Activated naive CD4-positive, alpha-beta T cell treated with anti-CD3 and anti-CD28 coated beads for 36 hours (primary cell): ENCODE measurements at regions of chr5 and their contacts with region 1.

Region 1: DNA sequence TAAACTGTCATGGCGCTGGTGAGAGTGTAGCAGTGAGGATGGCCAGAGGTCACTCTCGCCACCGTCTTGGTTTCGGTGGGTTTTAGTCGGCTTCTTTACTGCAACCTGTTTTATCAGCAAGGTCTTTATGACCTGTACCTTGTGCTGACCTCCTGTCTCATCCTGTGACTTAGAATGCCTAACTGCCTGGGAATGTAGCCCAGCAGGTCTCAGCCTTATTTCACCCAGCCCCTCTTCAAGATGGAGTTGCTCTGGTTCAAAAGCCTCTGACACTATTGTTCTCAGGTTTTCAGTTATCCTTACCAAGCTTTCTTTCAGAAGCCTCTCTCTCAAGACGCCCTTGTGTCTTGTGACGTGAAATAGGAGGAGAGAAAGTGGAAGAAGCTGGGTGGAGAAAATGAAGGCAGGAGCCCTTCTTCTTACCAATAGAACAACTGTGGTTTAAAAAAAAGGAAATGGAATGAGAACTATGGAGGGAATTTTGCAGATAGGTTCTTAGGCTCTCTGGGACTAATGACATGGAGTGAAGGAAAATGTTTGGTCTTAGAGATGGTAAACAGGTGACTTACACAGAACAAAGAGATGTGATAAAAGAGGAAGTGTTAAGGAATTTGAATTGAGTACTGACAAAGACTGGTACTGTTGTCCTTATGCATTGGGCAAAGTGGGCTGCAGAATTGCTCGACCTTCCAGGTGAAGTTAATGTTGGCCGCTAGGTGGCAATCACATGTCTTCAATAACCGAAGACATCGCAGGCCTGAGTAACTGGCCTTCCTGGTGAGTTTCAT is 133.3 kb upstream of the RAI14 start:
- DNase-seq: peak; percentile 73
- H3K4me3 Mint-ChIP-seq: no peak overlapping the region
- H3K27ac Mint-ChIP-seq: no peak overlapping the region
- H3K4me1 Mint-ChIP-seq: peaks cover 4% of the 10 kb centered on the region
- H3K27me3 Mint-ChIP-seq: peaks cover 3% of the 10 kb centered on the region

Region 2: GRCh38 chr5:34474573-34475021 is 48.2 kb before region 1 on chr5:
- CTCF ChIA-PET with region 1: interaction called, 4 read pairs
- intact Hi-C with region 1: loop called (anchors 1 kb)
- DNase-seq: peak; percentile 34
- H3K4me3 Mint-ChIP-seq: no peak overlapping the region
- H3K27ac Mint-ChIP-seq: no peak overlapping the region
- H3K4me1 Mint-ChIP-seq: no peaks in the 10 kb centered on the region
- H3K27me3 Mint-ChIP-seq: peaks cover 11% of the 10 kb centered on the region

Region 3: DNA sequence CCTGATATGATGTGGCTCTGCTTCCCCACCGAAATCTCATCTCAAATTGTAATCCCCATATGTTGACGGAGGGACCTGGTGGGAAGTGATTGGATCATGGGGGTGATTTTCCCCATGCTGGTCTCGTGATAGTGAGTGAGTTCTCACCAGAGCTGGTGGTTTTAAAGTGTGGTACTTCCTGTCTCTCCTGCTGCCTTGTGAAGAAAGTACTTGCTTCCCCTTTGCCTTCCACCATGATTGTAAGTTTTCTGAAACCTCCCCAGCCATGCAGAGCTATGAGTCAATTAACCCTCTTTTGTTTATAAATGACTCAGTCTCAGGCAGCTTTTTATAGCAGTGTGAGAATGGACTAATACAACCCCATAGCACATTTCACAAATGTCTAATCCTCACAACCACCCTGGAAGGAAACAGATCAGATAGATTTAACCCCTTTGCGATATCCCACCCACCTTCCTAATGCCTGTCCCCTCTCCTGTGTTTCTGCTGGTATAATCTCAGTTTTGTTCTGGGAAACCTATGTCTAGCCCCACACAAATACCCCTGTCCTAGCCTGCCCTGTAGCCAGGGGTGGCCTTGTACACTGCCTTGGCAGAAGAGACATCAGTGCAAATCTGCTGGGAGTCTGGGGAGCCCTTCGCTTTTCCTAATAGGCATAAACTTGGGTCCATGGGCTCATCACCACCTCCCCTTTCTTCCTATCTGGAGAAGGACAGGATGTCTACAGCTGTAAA is 23.6 kb before region 1 on chr5:
- CTCF ChIA-PET with region 1: no interaction called
- intact Hi-C with region 1: loop called (anchors 2 kb)
- DNase-seq: peak; percentile 63
- H3K4me3 Mint-ChIP-seq: no peak overlapping the region
- H3K27ac Mint-ChIP-seq: peak overlapping the region; percentile 74
- H3K4me1 Mint-ChIP-seq: peaks cover 13% of the 10 kb centered on the region
- H3K27me3 Mint-ChIP-seq: peaks cover 18% of the 10 kb centered on the region

Region 4: DNA sequence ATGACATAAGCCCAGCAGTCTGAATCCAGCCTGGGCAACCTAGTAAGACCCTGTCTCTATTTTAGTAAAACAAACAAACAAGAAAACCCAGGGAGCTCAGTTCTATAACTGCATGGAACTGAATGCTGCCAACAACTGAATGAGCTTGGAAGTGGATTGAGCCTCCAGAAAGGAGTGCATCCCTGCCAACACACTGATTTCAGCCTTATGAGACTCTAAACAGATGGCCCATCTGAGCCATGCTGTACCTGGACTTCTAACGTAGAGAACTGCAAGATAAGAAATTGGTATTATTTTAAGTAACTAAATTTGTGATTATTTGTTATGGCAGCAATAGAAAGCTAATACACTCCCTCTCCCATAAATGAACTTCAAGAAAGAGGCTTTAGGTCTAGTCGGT is 17.1 kb before region 1 on chr5:
- CTCF ChIA-PET with region 1: interaction called, 12 read pairs
- intact Hi-C with region 1: loop called (anchors 2 kb)
- DNase-seq: no peak
- H3K4me3 Mint-ChIP-seq: no peak overlapping the region
- H3K27ac Mint-ChIP-seq: no peak overlapping the region
- H3K4me1 Mint-ChIP-seq: no peaks in the 10 kb centered on the region
- H3K27me3 Mint-ChIP-seq: peaks cover 38% of the 10 kb centered on the region

Region 5: DNA sequence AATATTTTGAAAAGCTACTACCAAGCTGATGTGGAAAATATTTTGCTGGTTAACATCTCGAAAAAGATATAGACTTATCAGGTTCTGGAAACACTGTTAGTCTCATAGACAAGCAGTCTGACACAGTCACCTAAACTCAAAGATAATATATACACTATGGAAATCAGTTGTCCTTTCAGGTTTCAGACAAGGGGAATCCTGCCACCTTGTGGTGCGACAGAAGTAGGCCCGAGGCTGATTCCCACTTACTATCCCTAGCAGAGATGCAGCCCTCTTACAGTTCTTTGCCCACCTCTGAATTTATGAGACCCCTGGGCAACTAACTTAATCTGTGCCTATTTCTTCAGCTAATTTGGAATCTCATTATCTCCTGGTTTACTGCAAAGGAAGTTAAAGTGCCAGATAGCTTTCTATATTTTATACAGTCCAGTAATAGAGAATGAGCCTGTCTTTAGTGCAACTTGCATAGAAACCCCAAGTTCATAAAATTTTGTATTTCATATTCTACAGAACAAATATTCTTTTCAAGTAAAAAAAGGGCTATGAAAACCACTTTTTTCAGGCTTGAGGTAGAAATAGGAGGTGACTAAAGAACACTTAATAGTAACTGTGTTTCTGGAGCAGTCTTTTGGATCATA is 375.6 kb after region 1 on chr5:
- CTCF ChIA-PET with region 1: interaction called, 37 read pairs
- intact Hi-C with region 1: loop called (anchors 1 kb)
- DNase-seq: peak; percentile 77
- H3K4me3 Mint-ChIP-seq: no peak overlapping the region
- H3K27ac Mint-ChIP-seq: no peak overlapping the region
- H3K4me1 Mint-ChIP-seq: no peaks in the 10 kb centered on the region
- H3K27me3 Mint-ChIP-seq: no peaks in the 10 kb centered on the region